Heart left ventricle (tissue), 16 donors: ENCODE measurements at regions of chr1 and their contacts with region 1.

Region 1: GRCh38 chr1:7983086-7983778 is 21.7 kb downstream of the PARK7 start:
- DNase-seq: peak in 1 of 5 donors; percentile 41
- ATAC-seq: peak in 3 of 4 donors; percentile 57 to 77 (median 62)
- H3K4me3 ChIP-seq: no peak overlapping the region
- H3K27ac ChIP-seq: no peak overlapping the region
- H3K4me1 ChIP-seq: peaks cover 0 to 24% (median 7%) of the 10 kb centered on the region in 12 donors
- H3K27me3 ChIP-seq: no peaks in the 10 kb centered on the region
- CTCF ChIP-seq: no peak
- POLR2A ChIP-seq: no peak

Region 2: DNA sequence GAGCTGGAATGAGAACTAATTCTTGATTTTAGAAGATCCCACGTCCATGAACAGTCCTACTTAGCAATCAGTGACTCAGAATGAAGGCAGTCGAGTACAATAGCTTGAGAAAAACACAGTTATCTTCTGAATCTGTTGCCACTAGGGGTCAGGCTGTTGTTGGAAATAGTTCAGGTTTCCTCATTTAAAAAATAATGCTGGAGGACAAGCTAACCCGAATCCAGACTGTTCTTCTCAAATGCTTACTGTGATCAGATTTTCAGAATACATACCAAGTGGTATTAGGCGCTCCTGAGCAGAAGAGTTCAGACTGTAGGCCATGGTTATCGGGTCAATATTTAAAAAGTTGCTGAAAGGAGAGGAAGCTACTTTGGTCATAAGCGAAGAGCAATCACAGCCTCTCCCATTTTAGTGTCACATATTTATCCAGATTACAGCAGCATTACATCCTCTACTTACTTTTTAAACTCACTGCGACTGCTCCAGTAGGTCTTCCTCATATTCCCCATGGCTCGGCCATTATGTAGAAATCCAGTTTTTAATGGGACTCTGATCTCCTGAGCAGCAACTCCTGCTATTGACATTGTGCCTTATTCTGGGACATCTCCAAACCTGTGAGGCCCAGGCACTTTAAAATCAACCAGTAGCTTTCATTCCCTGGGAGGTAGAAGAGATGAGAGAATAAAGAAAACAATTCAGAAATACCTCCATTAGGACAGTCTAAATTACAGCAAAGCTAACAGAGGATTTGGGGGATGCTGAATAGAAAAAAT is 32.0 kb after region 1 on chr1:
- intact Hi-C with region 1: loop called in 4 of 10 experiments (anchors 5 kb)
- DNase-seq: peak in 2 of 5 donors; percentile 51 to 56
- ATAC-seq: peak; percentile 43 to 85 (median 76)
- H3K4me3 ChIP-seq: no peak overlapping the region
- H3K27ac ChIP-seq: peak overlapping the region in 11 of 12 donors; percentile 5 to 70 (median 23)
- H3K4me1 ChIP-seq: peaks cover 0 to 48% (median 35%) of the 10 kb centered on the region in 12 donors
- H3K27me3 ChIP-seq: no peaks in the 10 kb centered on the region
- CTCF ChIP-seq: peak; percentile 38 to 75 (median 63)
- POLR2A ChIP-seq: no peak

Region 3: GRCh38 chr1:8314346-8315280 is 331.4 kb after region 1 on chr1:
- intact Hi-C with region 1: loop called (anchors 1 to 5 kb)
- DNase-seq: peak in 4 of 5 donors; percentile 65 to 69 (median 66)
- ATAC-seq: peak; percentile 64 to 87 (median 80)
- H3K4me3 ChIP-seq: no peak overlapping the region
- H3K27ac ChIP-seq: no peak overlapping the region
- H3K4me1 ChIP-seq: peaks cover 0 to 31% (median 15%) of the 10 kb centered on the region in 12 donors
- H3K27me3 ChIP-seq: peaks cover 0 to 13% (median 0%) of the 10 kb centered on the region in 9 donors
- CTCF ChIP-seq: peak; percentile 60 to 88 (median 82)
- POLR2A ChIP-seq: no peak

Region 4: GRCh38 chr1:8348777-8349491 is 365.7 kb after region 1 on chr1:
- intact Hi-C with region 1: loop called in 6 of 10 experiments (anchors 2 to 5 kb)
- DNase-seq: peak in 3 of 5 donors; percentile 66 to 75 (median 73)
- ATAC-seq: peak in 3 of 4 donors; percentile 42 to 61 (median 49)
- H3K4me3 ChIP-seq: no peak overlapping the region
- H3K27ac ChIP-seq: peak overlapping the region in 1 of 12 donors; percentile 65
- H3K4me1 ChIP-seq: peaks cover 0 to 50% (median 26%) of the 10 kb centered on the region in 12 donors
- H3K27me3 ChIP-seq: no peaks in the 10 kb centered on the region
- CTCF ChIP-seq: peak; percentile 76 to 91 (median 84)
- POLR2A ChIP-seq: no peak